ENCODE measurements at regions of chr1 and their contacts with region 1.

Region 1: GRCh38 chr1:173946380-173946921 is 29.3 kb upstream of the SERPINC1 start:
- DNase-seq: no peak
- ATAC-seq: no peak

Region 2: DNA sequence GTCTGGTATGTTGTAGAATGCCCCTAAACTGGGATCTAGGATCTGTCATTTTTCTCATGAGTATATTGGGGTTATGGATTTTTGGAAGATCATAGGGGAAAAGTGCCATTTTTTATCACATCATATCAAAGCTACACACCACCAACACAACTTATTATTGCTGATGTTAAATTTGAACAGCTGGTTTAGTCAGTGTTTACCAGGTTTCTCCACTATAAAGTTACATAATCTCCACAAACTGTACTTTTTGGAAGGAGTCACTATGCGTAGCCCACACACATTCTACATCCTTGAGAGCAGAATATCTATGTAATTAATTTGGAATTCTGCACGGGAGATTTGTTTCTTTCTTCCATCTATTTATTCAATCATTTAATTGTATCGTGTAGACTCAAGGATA is 40.5 kb after region 1 on chr1:
- intact Hi-C with region 1: loop called (anchors 5 kb)
- DNase-seq: no peak
- ATAC-seq: no peak

Region 3: GRCh38 chr1:174174461-174175329 is 228.2 kb after region 1 on chr1:
- intact Hi-C with region 1: no loop called
- DNase-seq: no peak
- ATAC-seq: no peak